Panc1 (cell line): ENCODE measurements at regions of chr16 and their contacts with region 1.

Region 1: GRCh38 chr16:85211271-85211801 is 99.1 kb upstream of the CIBAR2 start:
- DNase-seq: no peak
- ATAC-seq: no peak
- H3K4me3 ChIP-seq: no peak overlapping the region
- H3K27ac ChIP-seq: no peak overlapping the region
- H3K4me1 ChIP-seq: peaks cover 20% of the 10 kb centered on the region
- H3K27me3 ChIP-seq: no peaks in the 10 kb centered on the region
- CTCF ChIP-seq: no peak

Region 2: DNA sequence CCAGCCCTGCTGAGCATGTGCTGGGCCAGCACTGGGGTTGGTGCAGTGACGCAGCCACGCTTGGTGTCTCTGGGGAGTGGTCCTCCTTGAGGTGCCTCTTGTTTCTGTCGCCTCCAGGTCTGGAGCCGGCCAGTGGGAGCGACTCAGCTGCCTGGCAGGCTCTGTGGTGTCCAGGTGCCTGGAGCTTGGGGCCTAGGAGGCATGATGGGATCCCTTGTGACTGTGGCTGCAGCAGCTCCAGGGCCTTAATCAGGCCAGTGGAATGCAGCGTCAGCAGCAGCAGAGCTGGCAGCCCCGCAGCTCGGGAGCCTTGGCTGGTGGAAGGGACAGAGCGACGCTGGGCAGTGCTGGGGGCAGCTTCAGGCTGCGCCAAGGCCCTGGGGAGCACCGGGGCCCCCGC is 24.3 kb before region 1 on chr16:
- CTCF ChIA-PET with region 1: no interaction called
- POLR2A ChIA-PET with region 1: no interaction called
- in situ Hi-C with region 1: no loop called
- intact Hi-C with region 1: no loop called
- DNase-seq: no peak
- ATAC-seq: peak; percentile 74; the same call in 1 of the 2 replicates
- H3K4me3 ChIP-seq: no peak overlapping the region
- H3K27ac ChIP-seq: no peak overlapping the region
- H3K4me1 ChIP-seq: peaks cover 12% of the 10 kb centered on the region
- H3K27me3 ChIP-seq: no peaks in the 10 kb centered on the region
- CTCF ChIP-seq: no peak

Region 3: DNA sequence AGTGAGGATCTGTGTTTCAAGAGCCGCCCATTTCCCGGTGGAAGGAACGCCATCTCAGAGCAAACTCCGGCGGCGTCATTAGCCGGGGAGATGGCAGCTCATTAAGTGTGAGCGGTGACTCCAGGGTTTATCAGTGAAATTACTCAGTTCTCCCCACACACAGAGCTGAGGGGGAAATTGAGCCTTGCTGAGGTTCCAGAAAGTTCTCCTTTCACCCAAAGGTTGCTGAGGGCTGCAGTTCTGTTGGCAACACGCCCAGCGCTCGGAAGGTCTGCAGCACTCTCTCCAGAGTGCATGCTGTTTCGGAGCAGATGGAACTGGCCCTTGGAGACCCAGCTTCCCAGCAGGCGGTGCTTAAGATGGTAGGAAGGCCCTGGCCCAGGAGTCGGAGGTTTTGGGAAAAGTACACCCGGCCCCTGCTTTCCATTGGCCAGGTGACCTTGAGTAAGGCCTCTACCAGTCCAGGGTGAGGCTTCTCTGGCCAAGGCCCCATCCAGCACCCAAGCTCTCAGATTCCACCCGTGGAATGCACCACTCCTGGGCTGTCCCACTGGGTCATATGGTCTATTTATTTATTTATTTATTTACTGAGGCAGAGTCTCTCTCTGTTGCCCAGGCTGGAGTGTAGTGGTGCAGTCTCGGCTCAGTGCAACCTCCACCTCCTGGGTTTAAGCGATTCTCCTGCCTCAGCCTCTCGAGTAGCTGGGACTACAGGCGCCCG is 68.6 kb after region 1 on chr16:
- CTCF ChIA-PET with region 1: interaction called, 11 read pairs
- POLR2A ChIA-PET with region 1: no interaction called
- in situ Hi-C with region 1: no loop called
- intact Hi-C with region 1: no loop called
- DNase-seq: no peak
- ATAC-seq: no peak
- H3K4me3 ChIP-seq: no peak overlapping the region
- H3K27ac ChIP-seq: no peak overlapping the region
- H3K4me1 ChIP-seq: no peaks in the 10 kb centered on the region; the same call in none of the 2 replicates
- H3K27me3 ChIP-seq: no peaks in the 10 kb centered on the region
- CTCF ChIP-seq: no peak

Region 4: DNA sequence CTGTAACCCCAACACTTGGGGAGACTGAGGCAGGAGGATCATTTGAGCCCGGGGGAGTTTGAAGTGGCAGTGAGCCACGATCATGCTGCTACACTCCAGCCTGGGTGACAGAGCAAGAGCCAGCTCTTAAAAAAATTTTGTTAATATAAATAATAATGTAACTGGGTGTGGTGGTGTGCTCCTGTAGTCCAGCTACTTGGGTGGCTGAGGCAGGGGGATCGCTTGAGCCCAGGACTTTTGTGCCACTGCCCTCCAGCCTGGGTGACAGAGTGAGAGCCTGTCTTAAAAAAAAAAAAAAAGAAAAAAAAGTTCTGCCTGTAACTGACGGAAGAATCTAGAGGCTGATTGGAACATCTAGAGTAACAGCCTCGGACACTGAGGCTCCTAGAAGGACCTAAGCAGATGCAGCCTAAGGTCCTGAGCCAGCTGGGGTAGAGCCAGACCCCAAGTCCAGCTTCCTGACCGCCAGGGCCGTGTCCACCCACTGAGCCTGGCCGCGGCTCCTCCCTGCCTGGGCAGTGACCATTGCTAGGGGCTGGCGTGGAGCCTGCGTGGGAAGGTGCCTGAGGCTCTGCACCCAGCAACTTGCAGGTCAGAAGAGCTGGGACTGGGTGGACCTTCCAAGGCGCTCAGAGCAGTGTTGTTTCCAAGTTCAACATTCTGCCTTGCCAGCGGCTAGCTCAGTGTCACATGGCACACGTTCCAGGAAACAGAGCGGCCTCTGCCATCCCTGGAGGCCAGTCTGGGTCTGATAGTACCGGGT is 110.4 kb after region 1 on chr16:
- CTCF ChIA-PET with region 1: interaction called, 15 read pairs
- POLR2A ChIA-PET with region 1: no interaction called
- in situ Hi-C with region 1: no loop called
- intact Hi-C with region 1: no loop called
- DNase-seq: no peak
- ATAC-seq: peak; percentile 86
- H3K4me3 ChIP-seq: peak overlapping the region in 1 of 2 experiments; percentile 15; a peak in 2 of 4 replicates
- H3K27ac ChIP-seq: peak overlapping the region; percentile 98
- H3K4me1 ChIP-seq: peaks cover 45% of the 10 kb centered on the region
- H3K27me3 ChIP-seq: no peaks in the 10 kb centered on the region
- CTCF ChIP-seq: no peak

Region 5: GRCh38 chr16:85564277-85565051 is 353.1 kb after region 1 on chr16:
- CTCF ChIA-PET with region 1: interaction called, 15 read pairs
- POLR2A ChIA-PET with region 1: no interaction called
- in situ Hi-C with region 1: no loop called
- intact Hi-C with region 1: no loop called
- DNase-seq: no peak
- ATAC-seq: peak; percentile 32
- H3K4me3 ChIP-seq: no peak overlapping the region
- H3K27ac ChIP-seq: peak overlapping the region; percentile 94
- H3K4me1 ChIP-seq: peaks cover 86% of the 10 kb centered on the region
- H3K27me3 ChIP-seq: no peaks in the 10 kb centered on the region
- CTCF ChIP-seq: peak; percentile 84